Breast epithelium (tissue), 4 donors: ENCODE measurements at regions of chr15 and their contacts with region 1.

Region 1: GRCh38 chr15:76987926-76988860 is 6.7 kb upstream of the PSTPIP1 start:
- DNase-seq: no peak
- H3K4me3 ChIP-seq: no peak overlapping the region
- H3K27ac ChIP-seq: no peak overlapping the region
- H3K4me1 ChIP-seq: no peaks in the 10 kb centered on the region
- H3K27me3 ChIP-seq: no peaks in the 10 kb centered on the region
- CTCF ChIP-seq: no peak
- POLR2A ChIP-seq: no peak

Region 2: GRCh38 chr15:77342807-77343206 is 354.6 kb after region 1 on chr15:
- intact Hi-C with region 1: loop called (anchors 5 kb)
- DNase-seq: no peak
- H3K4me3 ChIP-seq: no peak overlapping the region
- H3K27ac ChIP-seq: no peak overlapping the region
- H3K4me1 ChIP-seq: no peaks in the 10 kb centered on the region
- H3K27me3 ChIP-seq: no peaks in the 10 kb centered on the region
- CTCF ChIP-seq: no peak
- POLR2A ChIP-seq: no peak